ENCODE measurements at regions of chr15 and their contacts with region 1.

Region 1: GRCh38 chr15:78034495-78035191 is 42.9 kb downstream of the TBC1D2B start:
- DNase-seq: peak; percentile 61 to 91 (median 82)
- ATAC-seq: peak; percentile 82
- H3K4me3 ChIP-seq: peak overlapping the region; percentile 11 to 15
- H3K4me3 Mint-ChIP-seq: peak overlapping the region; percentile 76
- H3K27ac ChIP-seq: peak overlapping the region; percentile 59 to 88
- H3K27ac Mint-ChIP-seq: peak overlapping the region; percentile 97
- H3K4me1 ChIP-seq: peaks cover 65% of the 10 kb centered on the region
- H3K4me1 Mint-ChIP-seq: peaks cover 82% of the 10 kb centered on the region
- H3K27me3 ChIP-seq: no peaks in the 10 kb centered on the region
- H3K27me3 Mint-ChIP-seq: no peaks in the 10 kb centered on the region
- CTCF ChIP-seq: no peak

Region 2: DNA sequence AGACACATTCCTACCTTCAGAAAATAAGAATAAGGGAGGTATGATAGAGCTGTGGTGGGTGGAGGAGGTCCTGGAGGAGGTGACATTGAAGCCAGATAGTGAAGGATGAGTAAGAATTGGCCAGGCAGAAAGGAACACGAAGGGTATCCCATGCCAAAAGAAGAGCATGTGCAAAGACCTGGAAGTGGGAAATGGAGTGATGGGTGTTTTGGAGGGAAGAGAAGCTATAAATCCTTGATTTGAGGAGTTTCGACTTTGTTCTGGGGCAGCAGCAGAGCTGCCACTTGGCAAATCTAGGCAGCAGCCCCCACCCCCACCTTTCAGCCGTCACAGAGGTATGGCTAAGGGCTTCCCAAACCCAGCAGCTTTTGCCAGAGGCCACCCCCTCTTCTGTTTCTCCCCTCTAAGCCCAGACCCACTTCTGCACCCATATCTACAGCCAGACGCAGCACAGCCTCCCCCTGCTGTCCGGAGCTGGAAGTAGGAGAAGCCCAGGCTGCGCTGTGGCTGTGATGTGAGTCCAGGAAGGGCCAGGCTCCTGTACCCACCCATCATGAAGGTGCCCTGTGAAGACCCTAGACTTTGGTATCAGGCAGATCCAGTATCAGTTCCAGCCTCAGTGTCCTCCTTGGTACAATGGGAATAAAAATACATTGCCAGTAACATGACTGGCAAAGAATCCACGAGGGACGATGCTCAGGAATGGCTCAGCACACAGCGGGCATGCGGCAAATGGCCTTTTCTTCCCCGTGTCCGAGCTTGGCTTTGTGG is 213.3 kb before region 1 on chr15:
- CTCF ChIA-PET with region 1: no interaction called
- POLR2A ChIA-PET with region 1: no interaction called
- intact Hi-C with region 1: no loop called
- DNase-seq: peak in 4 of 9 experiments; percentile 10 to 24 (median 12)
- ATAC-seq: no peak
- H3K4me3 ChIP-seq: no peak overlapping the region
- H3K4me3 Mint-ChIP-seq: no peak overlapping the region
- H3K27ac ChIP-seq: no peak overlapping the region
- H3K27ac Mint-ChIP-seq: no peak overlapping the region
- H3K4me1 ChIP-seq: no peaks in the 10 kb centered on the region
- H3K4me1 Mint-ChIP-seq: peaks cover 8% of the 10 kb centered on the region
- H3K27me3 ChIP-seq: no peaks in the 10 kb centered on the region
- H3K27me3 Mint-ChIP-seq: peaks cover 45% of the 10 kb centered on the region
- CTCF ChIP-seq: no peak

Region 3: GRCh38 chr15:77889009-77889806 is 145.4 kb before region 1 on chr15:
- CTCF ChIA-PET with region 1: no interaction called
- POLR2A ChIA-PET with region 1: no interaction called
- intact Hi-C with region 1: no loop called
- DNase-seq: no peak
- ATAC-seq: no peak
- H3K4me3 ChIP-seq: no peak overlapping the region
- H3K4me3 Mint-ChIP-seq: no peak overlapping the region
- H3K27ac ChIP-seq: no peak overlapping the region
- H3K27ac Mint-ChIP-seq: no peak overlapping the region
- H3K4me1 ChIP-seq: no peaks in the 10 kb centered on the region
- H3K4me1 Mint-ChIP-seq: no peaks in the 10 kb centered on the region
- H3K27me3 ChIP-seq: no peaks in the 10 kb centered on the region
- H3K27me3 Mint-ChIP-seq: no peaks in the 10 kb centered on the region
- CTCF ChIP-seq: no peak

Region 4: GRCh38 chr15:77966540-77967290 is 67.9 kb before region 1 on chr15:
- CTCF ChIA-PET with region 1: interaction called, 17 read pairs
- POLR2A ChIA-PET with region 1: no interaction called
- intact Hi-C with region 1: loop called in 1 of 2 experiments (anchors 10 kb)
- DNase-seq: peak in 8 of 9 experiments; percentile 30 to 71 (median 55)
- ATAC-seq: peak; percentile 42
- H3K4me3 ChIP-seq: no peak overlapping the region
- H3K4me3 Mint-ChIP-seq: no peak overlapping the region
- H3K27ac ChIP-seq: no peak overlapping the region
- H3K27ac Mint-ChIP-seq: no peak overlapping the region
- H3K4me1 ChIP-seq: no peaks in the 10 kb centered on the region
- H3K4me1 Mint-ChIP-seq: no peaks in the 10 kb centered on the region
- H3K27me3 ChIP-seq: no peaks in the 10 kb centered on the region
- H3K27me3 Mint-ChIP-seq: peaks cover 2% of the 10 kb centered on the region
- CTCF ChIP-seq: peak; percentile 70

Region 5: DNA sequence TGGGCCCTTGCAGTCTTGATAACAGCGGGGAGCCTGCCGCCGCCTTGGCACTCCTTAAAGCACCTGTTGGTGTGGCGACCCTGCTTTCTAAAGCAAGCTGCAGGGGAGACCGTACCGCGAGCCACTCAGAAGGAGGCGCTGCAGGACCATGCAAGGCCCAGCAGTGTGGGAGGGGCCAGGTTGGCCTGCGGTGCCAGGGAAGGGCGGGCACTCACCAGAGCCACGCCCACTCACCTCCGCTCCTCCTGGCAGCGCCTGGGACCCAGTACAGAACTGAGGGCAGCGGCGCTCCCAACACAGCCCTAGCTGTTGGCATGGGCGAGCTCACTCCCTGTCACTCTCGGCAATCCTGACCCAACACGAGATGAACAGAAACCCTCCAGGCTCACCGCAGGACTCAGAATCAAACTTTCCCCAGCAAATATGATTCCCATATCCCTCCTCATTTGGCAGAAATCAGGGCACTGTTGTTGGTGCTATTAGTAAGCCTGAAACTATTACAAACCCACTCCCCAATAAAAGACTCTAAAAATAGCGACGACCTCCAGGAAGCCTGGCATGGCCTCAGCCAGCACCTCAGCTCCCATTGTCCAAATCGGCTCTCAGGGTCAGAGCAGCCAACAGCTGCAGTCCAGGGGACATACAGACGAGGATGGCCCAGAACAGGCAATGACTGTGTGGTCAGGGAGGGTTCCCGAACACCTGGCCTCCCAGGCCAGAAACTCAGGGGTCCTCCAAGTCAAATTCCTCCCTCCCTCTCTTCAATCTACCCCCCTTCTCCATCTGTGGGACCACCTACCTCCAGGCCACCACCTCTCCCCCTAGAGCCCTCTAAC is 34.3 kb before region 1 on chr15:
- CTCF ChIA-PET with region 1: interaction called, 5 read pairs
- POLR2A ChIA-PET with region 1: no interaction called
- intact Hi-C with region 1: loop called in 1 of 2 experiments (anchors 1 kb)
- DNase-seq: peak; percentile 56 to 85 (median 79)
- ATAC-seq: peak; percentile 99
- H3K4me3 ChIP-seq: no peak overlapping the region
- H3K4me3 Mint-ChIP-seq: no peak overlapping the region
- H3K27ac ChIP-seq: no peak overlapping the region
- H3K27ac Mint-ChIP-seq: peak overlapping the region; percentile 64
- H3K4me1 ChIP-seq: no peaks in the 10 kb centered on the region
- H3K4me1 Mint-ChIP-seq: peaks cover 6% of the 10 kb centered on the region
- H3K27me3 ChIP-seq: no peaks in the 10 kb centered on the region
- H3K27me3 Mint-ChIP-seq: no peaks in the 10 kb centered on the region
- CTCF ChIP-seq: peak; percentile 52

Region 6: DNA sequence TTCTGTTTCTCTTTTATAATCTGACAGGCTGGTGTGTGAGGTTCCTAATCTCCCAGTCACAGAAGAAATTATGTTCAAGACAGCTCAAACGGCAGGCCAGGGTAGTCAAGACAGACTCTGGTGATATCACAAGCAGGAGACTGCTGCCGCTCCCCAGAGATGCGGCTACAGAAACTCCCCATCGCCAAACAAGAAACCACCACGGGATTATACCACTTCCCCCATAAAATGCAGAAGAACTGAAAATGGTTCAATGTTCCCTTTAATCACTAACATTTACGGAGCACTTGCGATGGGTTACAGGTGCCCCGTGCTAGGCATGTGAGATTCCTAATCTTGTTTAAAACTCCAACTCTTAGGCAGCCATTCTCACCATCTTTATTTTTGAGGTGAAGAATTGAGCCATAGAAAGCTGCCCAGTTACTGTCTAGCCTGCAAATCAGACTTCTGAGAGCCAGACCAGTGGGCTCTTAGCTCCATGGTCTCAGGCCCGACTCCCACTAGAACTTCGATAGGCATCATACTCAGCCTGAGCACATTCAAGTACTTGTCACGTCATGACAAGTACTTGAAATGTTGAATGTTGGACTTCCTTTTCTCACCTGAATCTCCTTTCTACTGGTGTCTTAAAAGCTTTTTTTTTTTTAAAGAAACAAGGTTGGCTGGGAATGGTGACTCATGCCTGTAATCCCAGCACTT is 15.5 kb before region 1 on chr15:
- CTCF ChIA-PET with region 1: interaction called, 6 read pairs
- POLR2A ChIA-PET with region 1: interaction called, 16 read pairs
- intact Hi-C with region 1: loop called in 1 of 2 experiments (anchors 2 kb)
- DNase-seq: peak in 5 of 9 experiments; percentile 17 to 61 (median 37)
- ATAC-seq: peak; percentile 83
- H3K4me3 ChIP-seq: no peak overlapping the region
- H3K4me3 Mint-ChIP-seq: no peak overlapping the region
- H3K27ac ChIP-seq: no peak overlapping the region
- H3K27ac Mint-ChIP-seq: peak overlapping the region; percentile 47
- H3K4me1 ChIP-seq: peaks cover 6% of the 10 kb centered on the region
- H3K4me1 Mint-ChIP-seq: peaks cover 23% of the 10 kb centered on the region
- H3K27me3 ChIP-seq: no peaks in the 10 kb centered on the region
- H3K27me3 Mint-ChIP-seq: no peaks in the 10 kb centered on the region
- CTCF ChIP-seq: no peak

Region 7: DNA sequence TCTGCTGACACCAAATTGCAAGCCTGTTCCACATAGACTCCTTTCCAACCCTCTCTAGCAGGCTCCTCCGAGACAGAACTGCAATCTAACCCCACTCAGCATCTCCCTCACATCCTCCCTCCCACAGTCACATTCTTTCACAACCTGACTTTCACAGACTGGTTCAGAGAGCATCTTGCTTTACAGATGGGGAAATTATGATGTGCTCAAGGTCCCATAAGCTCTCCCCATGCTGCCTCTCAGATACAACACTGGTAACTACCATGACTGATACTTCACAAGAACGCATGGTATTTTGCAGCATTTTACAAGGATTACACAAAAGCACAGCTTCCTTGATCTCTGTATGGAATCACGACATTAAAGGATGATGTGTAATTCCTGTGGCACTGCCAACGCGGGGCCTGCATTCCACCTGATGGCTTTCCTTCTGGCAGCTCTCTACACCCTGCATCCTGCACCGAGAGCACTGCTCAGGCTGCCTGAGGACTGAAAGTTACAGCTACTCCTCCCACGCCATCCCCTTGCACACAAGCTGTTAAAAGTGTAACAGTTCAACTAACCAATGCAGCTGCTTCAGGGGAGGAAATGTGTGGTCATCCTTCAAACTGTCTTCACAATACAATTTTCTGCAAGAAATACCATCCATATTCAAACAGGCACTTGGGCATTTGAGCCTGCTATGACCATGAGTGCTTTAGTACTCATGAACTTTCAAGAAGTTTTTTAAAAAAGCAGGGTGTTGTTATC is 15.2 kb after region 1 on chr15:
- CTCF ChIA-PET with region 1: interaction called, 34 read pairs
- POLR2A ChIA-PET with region 1: interaction called, 44 read pairs
- intact Hi-C with region 1: loop called (anchors 1 to 2 kb)
- DNase-seq: peak in 7 of 9 experiments; percentile 39 to 80 (median 59)
- ATAC-seq: peak; percentile 39
- H3K4me3 ChIP-seq: peak overlapping the region; percentile 12 to 20
- H3K4me3 Mint-ChIP-seq: peak overlapping the region; percentile 63
- H3K27ac ChIP-seq: peak overlapping the region; percentile 30 to 92
- H3K27ac Mint-ChIP-seq: peak overlapping the region; percentile 88
- H3K4me1 ChIP-seq: peaks cover 88% of the 10 kb centered on the region
- H3K4me1 Mint-ChIP-seq: peaks cover 97% of the 10 kb centered on the region
- H3K27me3 ChIP-seq: no peaks in the 10 kb centered on the region
- H3K27me3 Mint-ChIP-seq: no peaks in the 10 kb centered on the region
- CTCF ChIP-seq: no peak

Region 8: GRCh38 chr15:78065284-78065872 is 30.7 kb after region 1 on chr15:
- CTCF ChIA-PET with region 1: interaction called, 12 read pairs
- POLR2A ChIA-PET with region 1: interaction called, 39 read pairs
- intact Hi-C with region 1: no loop called
- DNase-seq: peak in 2 of 9 experiments; percentile 37 to 56
- ATAC-seq: no peak
- H3K4me3 ChIP-seq: peak overlapping the region; percentile 9 to 14
- H3K4me3 Mint-ChIP-seq: no peak overlapping the region
- H3K27ac ChIP-seq: peak overlapping the region; percentile 1 to 87
- H3K27ac Mint-ChIP-seq: no peak overlapping the region
- H3K4me1 ChIP-seq: peaks cover 87% of the 10 kb centered on the region
- H3K4me1 Mint-ChIP-seq: peaks cover 21% of the 10 kb centered on the region
- H3K27me3 ChIP-seq: no peaks in the 10 kb centered on the region
- H3K27me3 Mint-ChIP-seq: no peaks in the 10 kb centered on the region
- CTCF ChIP-seq: no peak

Region 9: DNA sequence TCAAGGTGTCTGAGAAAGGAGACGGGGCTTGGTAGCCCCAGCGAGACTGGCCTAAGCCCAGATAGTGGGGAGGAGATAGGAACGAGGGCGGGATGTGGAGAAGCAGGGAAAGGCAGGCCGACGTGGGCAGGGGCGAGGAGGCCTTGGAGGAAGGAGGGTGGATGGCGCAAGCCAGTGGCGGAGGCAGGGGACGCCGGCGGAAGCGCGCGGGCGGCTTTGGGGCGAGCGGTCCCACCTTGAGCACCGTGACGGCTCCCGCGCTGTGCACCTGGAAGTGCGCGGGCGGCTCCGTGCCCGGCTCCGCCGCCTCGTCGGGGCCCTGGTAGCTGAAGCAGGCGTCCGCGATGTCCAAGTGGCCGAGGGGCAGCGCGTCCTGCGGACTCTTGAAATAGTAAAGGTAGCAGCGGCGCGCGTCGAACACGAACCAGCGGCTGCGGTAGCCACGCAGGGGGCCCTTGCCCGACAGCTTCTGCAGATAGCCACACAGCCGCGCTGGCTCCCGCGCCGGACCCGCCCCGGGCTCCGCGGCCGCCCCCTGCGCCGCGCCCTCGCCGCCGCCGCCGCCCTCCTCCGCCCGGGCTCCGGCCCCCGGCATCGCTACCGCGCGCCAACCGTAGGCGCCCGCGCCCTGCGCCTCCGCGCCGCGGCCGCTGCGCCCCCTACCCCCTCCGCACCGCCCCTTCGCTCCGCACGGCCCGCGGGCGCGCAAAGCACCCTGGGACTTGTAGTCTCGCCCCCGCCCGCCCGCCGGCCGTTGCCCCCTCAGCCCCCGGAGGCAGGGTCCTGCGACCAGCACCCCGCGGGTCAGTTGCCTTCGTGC is 42.6 kb after region 1 on chr15 and contains the start of gene TBC1D2B:
- CTCF ChIA-PET with region 1: interaction called, 16 read pairs
- POLR2A ChIA-PET with region 1: interaction called, 7 read pairs
- intact Hi-C with region 1: loop called (anchors 1 kb)
- DNase-seq: peak in 8 of 9 experiments; percentile 56 to 86 (median 71)
- ATAC-seq: peak; percentile 80
- H3K4me3 ChIP-seq: peak within 1 kb of the TSS; percentile 87 to 90
- H3K4me3 Mint-ChIP-seq: peak within 1 kb of the TSS; percentile 100
- H3K27ac ChIP-seq: peak within 1 kb of the TSS; percentile 57 to 76
- H3K27ac Mint-ChIP-seq: peak within 1 kb of the TSS; percentile 99
- H3K4me1 ChIP-seq: peaks cover 35% of the 10 kb centered on the region
- H3K4me1 Mint-ChIP-seq: peaks cover 46% of the 10 kb centered on the region
- H3K27me3 ChIP-seq: no peaks in the 10 kb centered on the region
- H3K27me3 Mint-ChIP-seq: no peaks in the 10 kb centered on the region
- CTCF ChIP-seq: no peak
- total RNA-seq, gene TBC1D2B: 88.7 to 101 TPM